ENCODE measurements at regions of chr22 and their contacts with region 1.

Region 1: GRCh38 chr22:30423982-30424963 is 1.3 kb upstream of the MTFP1 start:
- DNase-seq: peak; percentile 91 to 98 (median 94)
- ATAC-seq: peak; percentile 83
- H3K4me3 ChIP-seq: peak overlapping the region; percentile 59
- H3K27ac ChIP-seq: peak overlapping the region; percentile 94
- H3K4me1 ChIP-seq: peaks cover 46 to 47% of the 10 kb centered on the region in 2 experiments
- H3K27me3 ChIP-seq: no peaks in the 10 kb centered on the region
- CTCF ChIP-seq: 0 out of 6 replicates have a peak, but pooled peaks of 2 of the 3 experiments have one; percentile 3 to 6
- EP300 ChIP-seq: no peak
- POLR2A ChIP-seq: peak; percentile 29; the same call in 1 of the 2 replicates
- RAD21 ChIP-seq: no peak

Region 2: GRCh38 chr22:30340911-30341685 is 83.2 kb before region 1 on chr22:
- CTCF ChIA-PET with region 1: no interaction called
- POLR2A ChIA-PET with region 1: no interaction called
- in situ Hi-C with region 1: no loop called
- intact Hi-C with region 1: no loop called
- DNase-seq: no peak
- ATAC-seq: no peak
- H3K4me3 ChIP-seq: no peak overlapping the region
- H3K27ac ChIP-seq: no peak overlapping the region
- H3K4me1 ChIP-seq: no peaks in the 10 kb centered on the region
- H3K27me3 ChIP-seq: no peaks in the 10 kb centered on the region
- CTCF ChIP-seq: no peak
- EP300 ChIP-seq: no peak
- POLR2A ChIP-seq: no peak
- RAD21 ChIP-seq: no peak

Region 3: DNA sequence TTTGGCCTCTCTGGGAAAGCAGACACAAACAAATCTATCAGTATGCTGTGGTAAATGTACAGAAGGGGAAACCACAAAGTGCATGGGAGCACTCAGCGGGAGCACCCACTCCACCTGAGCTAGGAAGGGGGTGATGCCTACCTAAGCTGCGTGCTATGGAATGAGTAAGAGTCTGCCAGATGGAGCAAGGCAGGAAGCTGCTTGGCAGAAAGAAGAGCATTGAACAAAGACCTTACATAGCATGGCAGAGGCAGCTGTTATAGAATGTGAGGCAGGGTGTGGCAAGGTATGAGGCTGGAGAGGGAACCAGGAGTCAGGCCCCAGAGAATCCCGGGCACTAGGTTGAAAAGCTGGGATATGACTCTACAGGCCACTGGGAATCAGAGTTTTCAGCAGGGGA is 12.5 kb before region 1 on chr22:
- CTCF ChIA-PET with region 1: no interaction called
- POLR2A ChIA-PET with region 1: interaction called, 17 read pairs
- in situ Hi-C with region 1: no loop called
- intact Hi-C with region 1: no loop called
- DNase-seq: no peak
- ATAC-seq: no peak
- H3K4me3 ChIP-seq: no peak overlapping the region
- H3K27ac ChIP-seq: no peak overlapping the region
- H3K4me1 ChIP-seq: peaks cover 3 to 12% of the 10 kb centered on the region in 2 experiments; a peak in 3 of 5 replicates
- H3K27me3 ChIP-seq: no peaks in the 10 kb centered on the region
- CTCF ChIP-seq: no peak
- EP300 ChIP-seq: no peak
- POLR2A ChIP-seq: no peak
- RAD21 ChIP-seq: no peak

Region 4: GRCh38 chr22:30444632-30445437 is 20.6 kb after region 1 on chr22:
- CTCF ChIA-PET with region 1: no interaction called
- POLR2A ChIA-PET with region 1: interaction called, 3 read pairs
- in situ Hi-C with region 1: no loop called
- intact Hi-C with region 1: loop called (anchors 1 kb)
- DNase-seq: peak; percentile 77 to 84 (median 80)
- ATAC-seq: peak; percentile 86
- H3K4me3 ChIP-seq: no peak overlapping the region
- H3K27ac ChIP-seq: peak overlapping the region; percentile 55
- H3K4me1 ChIP-seq: peaks cover 32 to 33% of the 10 kb centered on the region in 2 experiments; a peak in 4 of 5 replicates
- H3K27me3 ChIP-seq: no peaks in the 10 kb centered on the region
- CTCF ChIP-seq: peak; percentile 79 to 84 (median 83)
- EP300 ChIP-seq: no peak
- POLR2A ChIP-seq: peak; percentile 81
- RAD21 ChIP-seq: peak; percentile 40 to 72

Region 5: GRCh38 chr22:30602049-30602448 is 177.8 kb after region 1 on chr22:
- CTCF ChIA-PET with region 1: no interaction called
- POLR2A ChIA-PET with region 1: no interaction called
- in situ Hi-C with region 1: no loop called
- intact Hi-C with region 1: no loop called
- DNase-seq: peak in 1 of 4 experiments; percentile 45
- ATAC-seq: peak; percentile 28; the same call in 2 of the 3 replicates
- H3K4me3 ChIP-seq: no peak overlapping the region
- H3K27ac ChIP-seq: no peak overlapping the region
- H3K4me1 ChIP-seq: peaks cover 5 to 11% of the 10 kb centered on the region in 2 experiments; a peak in 3 of 5 replicates
- H3K27me3 ChIP-seq: no peaks in the 10 kb centered on the region
- CTCF ChIP-seq: peak; percentile 38 to 41 (median 39); a peak in 5 of 6 replicates
- EP300 ChIP-seq: no peak
- POLR2A ChIP-seq: no peak
- RAD21 ChIP-seq: peak in 1 of 2 experiments; percentile 37; a peak in 2 of 4 replicates